Natural killer cell (primary cell): ENCODE measurements at regions of chr6 and their contacts with region 1.

Region 1: GRCh38 chr6:26216356-26216885 is 129.2 kb downstream of the HFE start:
- DNase-seq: peak; percentile 68 to 94
- ATAC-seq: peak; percentile 77 to 92 (median 79)
- H3K4me3 ChIP-seq: peak overlapping the region; percentile 63
- H3K4me3 Mint-ChIP-seq: no peak overlapping the region
- H3K27ac ChIP-seq: peak overlapping the region; percentile 91
- H3K27ac Mint-ChIP-seq: no peak overlapping the region
- H3K4me1 ChIP-seq: peaks cover 27% of the 10 kb centered on the region
- H3K4me1 Mint-ChIP-seq: no peaks in the 10 kb centered on the region
- H3K27me3 ChIP-seq: no peaks in the 10 kb centered on the region
- H3K27me3 Mint-ChIP-seq: no peaks in the 10 kb centered on the region
- CTCF ChIP-seq: no peak

Region 2: DNA sequence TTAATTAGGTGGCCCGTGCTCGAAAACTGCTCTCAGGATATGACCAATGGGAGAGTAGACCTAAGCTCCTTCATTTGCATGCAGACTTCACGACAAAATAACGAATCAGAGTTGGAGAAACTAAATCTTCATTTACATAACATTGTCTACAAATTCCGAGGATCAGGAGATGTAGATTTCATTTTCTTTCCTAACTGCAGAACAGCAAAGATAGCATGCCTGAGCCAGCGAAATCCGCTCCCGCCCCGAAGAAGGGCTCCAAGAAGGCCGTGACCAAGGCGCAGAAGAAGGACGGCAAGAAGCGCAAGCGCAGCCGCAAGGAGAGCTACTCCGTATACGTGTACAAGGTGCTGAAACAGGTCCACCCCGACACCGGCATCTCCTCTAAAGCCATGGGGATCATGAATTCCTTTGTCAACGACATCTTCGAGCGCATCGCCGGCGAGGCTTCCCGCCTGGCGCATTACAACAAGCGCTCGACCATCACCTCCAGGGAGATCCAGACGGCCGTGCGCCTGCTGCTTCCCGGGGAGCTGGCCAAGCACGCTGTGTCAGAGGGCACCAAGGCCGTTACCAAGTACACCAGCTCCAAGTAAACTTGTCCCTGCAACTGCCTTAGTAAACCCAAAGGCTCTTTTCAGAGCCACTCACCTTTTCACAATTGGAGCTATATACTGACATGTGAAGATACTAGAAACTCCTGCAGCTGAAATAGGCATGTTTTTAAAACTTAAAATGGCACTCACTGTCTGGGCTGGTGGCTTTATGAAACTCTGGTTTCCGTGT is 32.6 kb before region 1 on chr6:
- intact Hi-C with region 1: loop called (anchors 2 kb)
- DNase-seq: peak; percentile 50 to 87
- ATAC-seq: peak; percentile 86 to 90 (median 88)
- H3K4me3 ChIP-seq: peak overlapping the region; percentile 60
- H3K4me3 Mint-ChIP-seq: peak overlapping the region; percentile 93
- H3K27ac ChIP-seq: peak overlapping the region; percentile 58
- H3K27ac Mint-ChIP-seq: peak overlapping the region; percentile 89 to 90
- H3K4me1 ChIP-seq: peaks cover 28% of the 10 kb centered on the region
- H3K4me1 Mint-ChIP-seq: peaks cover 27 to 50% of the 10 kb centered on the region in 2 donors
- H3K27me3 ChIP-seq: no peaks in the 10 kb centered on the region
- H3K27me3 Mint-ChIP-seq: no peaks in the 10 kb centered on the region
- CTCF ChIP-seq: no peak

Region 3: DNA sequence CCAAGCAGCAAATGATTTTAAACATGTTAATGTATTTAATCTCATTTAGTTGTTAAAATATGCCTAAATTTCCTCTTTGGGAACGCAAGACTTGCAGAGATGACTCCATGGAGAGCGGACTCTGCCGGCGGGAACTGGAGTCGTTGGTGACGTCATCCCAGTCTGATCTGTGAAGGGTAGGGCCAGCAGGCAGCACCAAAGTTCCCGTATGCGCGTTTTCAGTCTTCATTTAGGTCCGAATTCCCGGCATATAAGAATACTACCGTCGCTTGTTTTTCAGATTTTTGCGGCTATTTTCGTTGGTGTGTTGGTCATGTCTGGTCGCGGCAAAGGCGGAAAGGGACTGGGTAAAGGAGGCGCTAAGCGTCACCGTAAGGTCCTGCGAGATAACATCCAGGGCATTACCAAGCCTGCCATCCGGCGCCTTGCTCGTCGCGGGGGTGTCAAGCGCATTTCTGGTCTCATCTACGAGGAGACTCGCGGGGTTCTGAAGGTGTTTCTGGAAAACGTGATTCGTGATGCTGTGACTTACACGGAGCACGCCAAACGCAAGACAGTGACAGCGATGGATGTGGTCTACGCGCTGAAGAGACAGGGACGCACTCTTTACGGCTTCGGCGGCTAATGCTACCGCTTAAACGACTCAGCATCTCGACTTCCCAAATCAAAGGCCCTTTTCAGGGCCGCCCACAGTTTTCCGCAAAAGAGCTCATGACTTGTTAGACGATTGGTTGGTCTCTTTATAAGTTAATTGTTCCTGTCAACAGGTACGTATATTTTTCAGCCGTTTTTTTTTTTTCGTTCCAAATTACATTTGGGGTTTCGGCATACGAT is 11.9 kb before region 1 on chr6:
- intact Hi-C with region 1: loop called (anchors 1 kb)
- DNase-seq: peak; percentile 78 to 97
- ATAC-seq: peak; percentile 63 to 81 (median 69)
- H3K4me3 ChIP-seq: peak overlapping the region; percentile 81
- H3K4me3 Mint-ChIP-seq: no peak overlapping the region
- H3K27ac ChIP-seq: peak overlapping the region; percentile 96
- H3K27ac Mint-ChIP-seq: no peak overlapping the region
- H3K4me1 ChIP-seq: peaks cover 25% of the 10 kb centered on the region
- H3K4me1 Mint-ChIP-seq: peaks cover 13 to 19% of the 10 kb centered on the region in 2 donors
- H3K27me3 ChIP-seq: no peaks in the 10 kb centered on the region
- H3K27me3 Mint-ChIP-seq: no peaks in the 10 kb centered on the region
- CTCF ChIP-seq: peak; percentile 23

Region 4: DNA sequence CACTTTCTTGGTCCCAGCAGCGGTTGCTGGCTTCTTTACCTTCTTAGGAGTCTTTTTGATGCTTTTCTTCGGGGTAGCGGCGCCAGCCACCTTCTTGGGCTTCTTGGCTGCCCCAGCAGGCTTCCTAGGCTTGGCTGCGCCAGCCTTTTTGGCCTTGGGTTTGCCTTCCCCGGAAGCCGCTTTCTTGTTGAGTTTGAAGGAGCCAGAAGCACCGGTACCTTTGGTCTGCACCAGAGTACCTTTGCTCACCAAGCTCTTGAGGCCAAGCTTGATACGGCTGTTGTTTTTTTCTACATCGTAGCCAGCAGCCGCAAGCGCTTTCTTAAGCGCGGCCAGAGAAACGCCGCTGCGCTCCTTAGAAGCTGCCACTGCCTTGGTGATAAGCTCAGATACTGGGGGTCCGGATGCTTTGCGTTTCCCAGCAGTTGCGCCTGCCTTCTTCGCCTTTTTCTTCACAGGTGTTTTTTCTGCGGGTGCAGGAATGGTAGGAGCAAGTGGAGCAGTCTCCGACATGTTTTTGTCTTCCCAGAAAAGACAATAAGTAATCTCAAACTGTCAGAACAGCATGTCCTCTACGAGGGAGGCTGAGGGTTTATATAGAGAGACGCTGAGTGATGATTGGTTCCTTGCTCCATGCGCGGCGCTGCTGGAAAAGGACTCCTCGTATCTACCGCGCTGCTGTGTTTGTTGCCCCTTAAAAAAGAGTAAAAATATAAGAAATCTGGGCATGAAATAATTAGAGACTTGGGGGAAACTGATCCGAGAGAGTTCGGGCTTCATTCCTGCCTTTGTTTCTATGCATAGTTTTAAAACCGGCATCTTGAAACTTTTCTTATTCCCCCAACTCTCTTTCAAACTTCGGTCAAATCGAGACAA is 18.2 kb after region 1 on chr6:
- intact Hi-C with region 1: loop called (anchors 2 kb)
- DNase-seq: peak; percentile 64 to 86
- ATAC-seq: peak; percentile 73 to 84 (median 73)
- H3K4me3 ChIP-seq: peak overlapping the region; percentile 69
- H3K4me3 Mint-ChIP-seq: peak overlapping the region; percentile 91
- H3K27ac ChIP-seq: peak overlapping the region; percentile 92
- H3K27ac Mint-ChIP-seq: peak overlapping the region; percentile 91 to 98
- H3K4me1 ChIP-seq: peaks cover 23% of the 10 kb centered on the region
- H3K4me1 Mint-ChIP-seq: peaks cover 32 to 37% of the 10 kb centered on the region in 2 donors
- H3K27me3 ChIP-seq: no peaks in the 10 kb centered on the region
- H3K27me3 Mint-ChIP-seq: no peaks in the 10 kb centered on the region
- CTCF ChIP-seq: no peak

Region 5: GRCh38 chr6:26249957-26250697 is 33.7 kb after region 1 on chr6:
- intact Hi-C with region 1: loop called (anchors 2 kb)
- DNase-seq: peak; percentile 62 to 89
- ATAC-seq: peak; percentile 64 to 79 (median 68)
- H3K4me3 ChIP-seq: peak overlapping the region; percentile 74
- H3K4me3 Mint-ChIP-seq: peak overlapping the region; percentile 98
- H3K27ac ChIP-seq: peak overlapping the region; percentile 70
- H3K27ac Mint-ChIP-seq: peak overlapping the region; percentile 96 to 97
- H3K4me1 ChIP-seq: peaks cover 16% of the 10 kb centered on the region
- H3K4me1 Mint-ChIP-seq: peaks cover 39 to 40% of the 10 kb centered on the region in 2 donors
- H3K27me3 ChIP-seq: no peaks in the 10 kb centered on the region
- H3K27me3 Mint-ChIP-seq: no peaks in the 10 kb centered on the region
- CTCF ChIP-seq: peak; percentile 44

Region 6: DNA sequence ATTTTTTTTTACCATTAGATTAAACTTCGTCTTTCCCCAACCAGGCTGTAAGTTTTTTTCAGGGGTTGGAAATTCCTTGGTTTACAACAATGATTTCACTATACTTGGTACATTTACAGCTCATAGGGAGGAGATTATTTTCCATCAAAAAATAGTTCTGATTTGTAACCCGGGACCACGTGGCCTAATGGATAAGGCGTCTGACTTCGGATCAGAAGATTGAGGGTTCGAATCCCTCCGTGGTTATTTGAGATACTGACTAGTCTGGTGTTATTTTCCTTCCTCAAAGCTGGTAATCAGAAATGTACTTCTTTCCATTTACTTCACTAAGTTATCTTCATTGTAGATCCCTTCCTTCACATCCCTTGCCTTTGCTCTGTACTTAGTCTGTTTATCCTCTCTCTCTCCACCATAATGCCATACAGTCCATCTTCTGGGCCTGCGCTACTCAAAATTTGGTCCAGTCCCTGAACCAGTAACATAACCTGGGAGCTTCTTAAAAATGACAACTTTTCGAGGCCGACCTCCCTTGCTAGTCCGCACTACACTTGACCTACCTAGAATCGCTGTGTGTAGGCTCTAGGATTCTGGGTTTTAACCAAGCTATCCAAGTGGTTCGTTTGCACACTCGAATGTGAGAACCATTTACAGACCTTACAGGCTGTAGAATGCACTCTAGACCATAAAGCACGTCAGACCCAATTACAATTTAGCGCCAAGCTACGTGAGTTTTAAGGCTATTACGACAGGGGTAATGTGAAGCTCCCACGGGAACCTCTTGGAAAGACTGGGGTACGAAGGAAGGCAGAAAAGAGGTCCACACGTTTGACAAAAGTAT is 106.4 kb after region 1 on chr6:
- intact Hi-C with region 1: no loop called
- DNase-seq: peak in 1 of 2 donors; percentile 85
- ATAC-seq: peak; percentile 72 to 76 (median 75)
- H3K4me3 ChIP-seq: peak overlapping the region; percentile 47
- H3K4me3 Mint-ChIP-seq: peak overlapping the region; percentile 68
- H3K27ac ChIP-seq: no peak overlapping the region
- H3K27ac Mint-ChIP-seq: peak overlapping the region; percentile 86 to 92
- H3K4me1 ChIP-seq: peaks cover 16% of the 10 kb centered on the region
- H3K4me1 Mint-ChIP-seq: peaks cover 25 to 27% of the 10 kb centered on the region in 2 donors
- H3K27me3 ChIP-seq: peaks cover 15% of the 10 kb centered on the region
- H3K27me3 Mint-ChIP-seq: peaks cover 32 to 38% of the 10 kb centered on the region in 2 donors
- CTCF ChIP-seq: no peak